HEK293T (cell line): ENCODE measurements at regions of chr6 and their contacts with region 1.

Region 1: GRCh38 chr6:26204332-26205165 is 117.3 kb downstream of the HFE start:
- DNase-seq: peak; percentile 86

Region 2: DNA sequence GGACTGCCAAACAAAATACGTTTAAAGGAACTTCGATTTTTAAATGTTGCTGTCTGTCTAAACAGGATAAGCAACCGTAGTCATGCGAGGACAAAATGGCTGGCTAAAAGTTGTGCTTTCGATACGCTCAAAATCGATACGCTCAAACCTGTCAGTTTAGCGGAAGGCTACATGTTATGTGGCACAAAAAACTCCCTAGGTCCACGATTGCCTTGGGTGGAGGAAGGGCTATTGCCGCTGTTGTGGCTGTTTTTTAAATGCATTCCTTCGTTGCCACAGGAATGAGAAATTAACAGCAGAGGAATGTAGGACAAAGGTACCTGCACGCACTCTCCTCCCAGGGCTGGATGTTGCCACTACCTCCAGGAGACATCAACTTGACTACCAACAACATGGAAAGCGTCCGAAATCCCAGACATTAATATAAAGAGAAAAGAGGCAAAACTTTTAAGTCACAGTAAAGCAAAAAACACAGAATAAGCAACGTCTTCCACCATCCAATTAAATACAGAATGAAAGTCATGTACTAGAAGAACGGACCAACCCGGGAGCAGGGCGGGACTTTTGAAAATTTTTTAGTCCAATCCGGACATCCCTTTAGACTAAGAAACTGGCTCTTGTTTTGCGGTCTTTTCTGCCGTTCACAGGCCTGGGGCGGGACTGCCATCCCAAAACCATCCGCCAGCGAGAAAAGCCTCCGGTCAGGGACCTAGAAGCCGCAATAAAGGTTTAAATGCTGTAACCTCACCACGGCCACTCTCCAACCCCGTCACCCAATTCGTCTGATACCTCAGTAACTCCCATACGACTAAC is 149.5 kb before region 1 on chr6:
- CTCF ChIA-PET with region 1: no interaction called
- POLR2A ChIA-PET with region 1: interaction called, 24 read pairs
- DNase-seq: peak; percentile 62

Region 3: DNA sequence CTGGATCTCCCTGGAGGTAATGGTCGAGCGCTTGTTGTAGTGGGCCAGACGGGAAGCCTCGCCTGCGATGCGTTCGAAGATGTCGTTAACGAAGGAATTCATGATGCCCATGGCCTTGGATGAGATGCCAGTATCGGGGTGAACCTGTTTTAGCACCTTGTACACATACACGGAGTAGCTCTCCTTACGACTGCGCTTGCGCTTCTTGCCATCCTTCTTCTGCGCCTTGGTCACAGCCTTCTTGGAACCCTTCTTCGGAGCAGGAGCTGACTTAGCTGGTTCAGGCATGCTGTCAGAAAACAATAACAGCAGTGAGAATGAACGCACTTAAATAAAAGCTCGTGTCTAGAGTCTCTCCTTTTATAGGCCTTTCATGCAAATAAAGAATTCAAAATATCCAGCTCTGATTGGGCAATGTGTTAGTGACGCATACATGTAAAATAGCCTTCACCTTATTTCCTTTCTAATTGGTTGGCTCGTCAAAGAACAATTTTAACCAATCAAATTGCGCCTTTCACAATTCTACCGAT is 11.9 kb after region 1 on chr6:
- CTCF ChIA-PET with region 1: interaction called, 3 read pairs
- POLR2A ChIA-PET with region 1: interaction called, 58 read pairs
- DNase-seq: no peak

Region 4: GRCh38 chr6:26223650-26224546 is 19.3 kb after region 1 on chr6:
- CTCF ChIA-PET with region 1: interaction called, 3 read pairs
- POLR2A ChIA-PET with region 1: interaction called, 22 read pairs
- DNase-seq: peak; percentile 63

Region 5: GRCh38 chr6:26234421-26235296 is 30.1 kb after region 1 on chr6:
- CTCF ChIA-PET with region 1: no interaction called
- POLR2A ChIA-PET with region 1: interaction called, 17 read pairs
- DNase-seq: peak; percentile 72